ENCODE measurements at regions of chr22 and their contacts with region 1.

Region 1: DNA sequence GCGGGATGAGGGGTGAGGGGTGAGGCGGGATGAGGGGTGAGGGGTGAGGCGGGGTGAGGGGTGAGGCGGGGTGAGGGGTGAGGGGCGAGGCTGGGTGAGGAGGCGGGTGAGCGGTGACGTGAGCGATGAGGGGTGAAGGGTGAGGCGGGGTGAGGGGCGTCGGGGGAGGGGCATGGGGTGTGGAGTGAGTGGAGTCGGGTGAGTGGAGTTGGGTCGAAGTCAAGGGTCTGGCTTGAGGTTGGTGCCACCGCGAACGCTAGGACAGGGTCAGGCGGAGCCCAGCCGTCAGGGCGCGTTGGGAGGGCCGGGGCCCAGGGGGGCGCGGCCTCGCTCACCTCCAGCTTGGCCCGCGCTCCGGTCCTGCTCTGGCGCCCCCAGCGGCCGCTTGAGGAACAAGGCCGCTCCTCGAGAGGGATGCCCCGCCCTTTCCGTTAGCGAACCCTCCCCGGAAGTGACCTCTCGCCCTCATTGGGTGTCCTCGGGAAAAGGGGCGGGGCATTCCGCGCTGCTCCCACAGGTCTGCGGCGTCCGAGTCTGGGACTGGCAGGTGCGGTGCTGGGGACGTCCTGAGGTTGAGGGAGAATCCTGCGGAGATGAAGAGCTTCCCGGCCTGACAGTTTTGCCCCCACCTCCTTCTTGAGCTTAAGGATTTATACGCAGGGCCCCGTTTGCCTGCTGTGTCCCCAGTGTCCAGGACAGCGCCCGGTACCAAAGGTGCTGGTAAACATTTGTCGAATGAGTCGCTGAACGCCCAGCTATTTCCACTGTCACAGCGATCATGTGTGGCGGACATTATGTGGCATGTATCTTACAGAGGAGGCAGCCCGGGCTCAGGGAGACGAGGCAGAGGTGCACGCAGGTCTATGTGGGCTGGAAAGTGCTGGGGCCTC is at the start of gene SYCE3:
- DNase-seq: peak; percentile 94 to 96 (median 95)
- H3K4me3 ChIP-seq: peak within 1 kb of the TSS; percentile 53 to 94 (median 66)
- H3K4me3 Mint-ChIP-seq: peak within 1 kb of the TSS; percentile 88 to 96
- H3K27ac ChIP-seq: peak within 1 kb of the TSS in 1 of 2 donors; percentile 45
- H3K27ac Mint-ChIP-seq: peak within 1 kb of the TSS; percentile 57 to 95 (median 73)
- H3K4me1 ChIP-seq: peaks cover 8 to 13% of the 10 kb centered on the region in 2 donors
- H3K4me1 Mint-ChIP-seq: peaks cover 17% of the 10 kb centered on the region
- H3K27me3 ChIP-seq: peaks cover 0 to 8% of the 10 kb centered on the region in 2 donors
- H3K27me3 Mint-ChIP-seq: peaks cover 17 to 22% (median 17%) of the 10 kb centered on the region in 3 donors
- CTCF ChIP-seq: peak; percentile 87
- polyA plus RNA-seq, gene SYCE3: 1.9 to 3.1 TPM in 2 of 3 donors, not detected in the other

Region 2: GRCh38 chr22:50525390-50526068 is 37.2 kb before region 1 on chr22 and contains the start of gene SCO2:
- intact Hi-C with region 1: loop called (anchors 2 to 5 kb)
- DNase-seq: peak; percentile 93 to 94 (median 94)
- H3K4me3 ChIP-seq: peak within 1 kb of the TSS; percentile 72 to 99 (median 73)
- H3K4me3 Mint-ChIP-seq: peak within 1 kb of the TSS; percentile 91 to 95
- H3K27ac ChIP-seq: peak within 1 kb of the TSS; percentile 100
- H3K27ac Mint-ChIP-seq: peak within 1 kb of the TSS; percentile 94 to 100 (median 97)
- H3K4me1 ChIP-seq: peaks cover 42 to 68% of the 10 kb centered on the region in 2 donors
- H3K4me1 Mint-ChIP-seq: peaks cover 30% of the 10 kb centered on the region
- H3K27me3 ChIP-seq: no peaks in the 10 kb centered on the region
- H3K27me3 Mint-ChIP-seq: no peaks in the 10 kb centered on the region
- CTCF ChIP-seq: no peak
- polyA plus RNA-seq, gene SCO2: 39.5 to 101 (median 69.6) TPM

Region 3: DNA sequence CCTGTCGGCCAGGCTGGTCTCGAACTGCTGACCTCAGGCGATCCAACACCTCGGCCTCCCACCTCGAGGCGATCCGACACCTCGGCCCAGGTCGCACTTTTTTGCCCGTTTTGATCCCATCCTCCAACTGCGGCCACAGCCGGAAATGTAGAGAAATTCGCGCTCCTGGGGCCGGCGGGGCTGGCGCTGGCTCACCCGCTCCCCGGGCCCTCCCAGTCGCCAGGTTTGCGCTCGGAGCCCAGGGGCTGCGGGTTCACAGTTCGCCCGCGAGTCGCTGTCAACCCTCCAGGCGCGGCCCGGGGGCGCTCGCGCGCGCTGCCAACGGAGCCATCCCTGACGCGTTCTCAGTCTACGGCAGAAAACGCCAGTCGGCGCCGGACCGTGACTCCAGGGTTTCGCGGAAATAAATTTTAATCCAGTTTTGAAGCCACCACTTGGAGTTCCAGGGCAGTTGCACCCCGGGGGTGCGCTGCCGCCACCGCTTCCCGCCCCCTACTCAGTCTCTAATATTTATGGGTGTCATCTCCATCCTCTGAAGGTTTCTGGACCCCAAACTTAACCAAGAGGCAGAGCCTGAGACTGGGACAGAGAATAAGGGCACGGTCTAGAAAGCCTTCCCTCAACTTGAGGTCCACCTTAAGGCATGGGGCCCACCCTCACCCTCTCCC is 18.6 kb before region 1 on chr22:
- intact Hi-C with region 1: loop called (anchors 2 kb)
- DNase-seq: peak; percentile 86 to 89 (median 86)
- H3K4me3 ChIP-seq: peak overlapping the region; percentile 18 to 73 (median 34)
- H3K4me3 Mint-ChIP-seq: peak overlapping the region; percentile 72 to 79
- H3K27ac ChIP-seq: peak overlapping the region; percentile 99 to 100
- H3K27ac Mint-ChIP-seq: peak overlapping the region; percentile 97 to 100 (median 99)
- H3K4me1 ChIP-seq: peaks cover 78 to 96% of the 10 kb centered on the region in 2 donors
- H3K4me1 Mint-ChIP-seq: peaks cover 66% of the 10 kb centered on the region
- H3K27me3 ChIP-seq: no peaks in the 10 kb centered on the region
- H3K27me3 Mint-ChIP-seq: peaks cover 1 to 20% (median 3%) of the 10 kb centered on the region in 3 donors
- CTCF ChIP-seq: peak; percentile 76